PC-9 (cell line): ENCODE measurements at regions of chr13 and their contacts with region 1.

Region 1: DNA sequence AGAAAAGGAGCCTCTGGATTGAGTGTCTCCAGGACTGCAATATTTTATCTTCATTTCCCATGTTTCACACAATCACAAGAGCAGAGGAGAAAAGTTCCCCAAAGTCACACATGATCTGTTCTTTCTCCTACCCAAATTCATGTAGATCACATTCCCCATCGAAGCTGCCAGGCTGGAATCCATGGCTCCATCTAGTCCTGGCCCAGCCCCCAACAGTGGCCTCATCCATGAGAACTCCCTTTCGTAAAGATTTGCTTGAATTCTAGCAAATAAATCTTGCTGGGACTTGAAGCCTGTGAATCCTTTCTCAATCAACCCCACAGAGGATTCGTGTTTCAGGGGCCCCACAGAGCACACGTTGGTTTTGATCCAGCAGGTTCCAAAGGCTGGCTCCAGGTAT is 109.5 kb downstream of the COL4A1 start:
- DNase-seq: no peak
- H3K4me3 ChIP-seq: no peak overlapping the region
- H3K27ac ChIP-seq: no peak overlapping the region
- H3K4me1 ChIP-seq: no peaks in the 10 kb centered on the region
- H3K27me3 ChIP-seq: no peaks in the 10 kb centered on the region
- CTCF ChIP-seq: no peak

Region 2: GRCh38 chr13:111521030-111521429 is 1323.6 kb after region 1 on chr13:
- CTCF ChIA-PET with region 1: no interaction called
- POLR2A ChIA-PET with region 1: interaction called, 10 read pairs
- intact Hi-C with region 1: no loop called
- DNase-seq: no peak
- H3K4me3 ChIP-seq: no peak overlapping the region
- H3K27ac ChIP-seq: no peak overlapping the region
- H3K4me1 ChIP-seq: no peaks in the 10 kb centered on the region
- H3K27me3 ChIP-seq: peaks cover 73% of the 10 kb centered on the region
- CTCF ChIP-seq: no peak